ENCODE measurements at regions of chr3 and their contacts with region 1.

Region 1: GRCh38 chr3:14467814-14468620 is 65.6 kb downstream of the SLC6A6 start:
- DNase-seq: peak in 1 of 2 experiments; percentile 72
- H3K4me3 ChIP-seq: no peak overlapping the region
- H3K27ac ChIP-seq: 0 out of 2 replicates have a peak overlapping the region, but pooled peaks have one; percentile 3
- H3K4me1 ChIP-seq: peaks cover 0 to 2% (median under 1%) of the 10 kb centered on the region in 4 experiments; a peak in 4 of 7 replicates
- H3K27me3 ChIP-seq: no peaks in the 10 kb centered on the region
- CTCF ChIP-seq: peak in 2 of 3 experiments; percentile 85; a peak in 3 of 4 replicates
- EP300 ChIP-seq: no peak
- POLR2A ChIP-seq: no peak
- RAD21 ChIP-seq: peak; percentile 88 to 94

Region 2: GRCh38 chr3:14210843-14211594 is 257.0 kb before region 1 on chr3:
- CTCF ChIA-PET with region 1: interaction called, 40 read pairs
- POLR2A ChIA-PET with region 1: no interaction called
- DNase-seq: no peak
- H3K4me3 ChIP-seq: no peak overlapping the region
- H3K27ac ChIP-seq: no peak overlapping the region
- H3K4me1 ChIP-seq: no peaks in the 10 kb centered on the region
- H3K27me3 ChIP-seq: no peaks in the 10 kb centered on the region
- CTCF ChIP-seq: no peak
- EP300 ChIP-seq: no peak
- POLR2A ChIP-seq: no peak
- RAD21 ChIP-seq: no peak

Region 3: DNA sequence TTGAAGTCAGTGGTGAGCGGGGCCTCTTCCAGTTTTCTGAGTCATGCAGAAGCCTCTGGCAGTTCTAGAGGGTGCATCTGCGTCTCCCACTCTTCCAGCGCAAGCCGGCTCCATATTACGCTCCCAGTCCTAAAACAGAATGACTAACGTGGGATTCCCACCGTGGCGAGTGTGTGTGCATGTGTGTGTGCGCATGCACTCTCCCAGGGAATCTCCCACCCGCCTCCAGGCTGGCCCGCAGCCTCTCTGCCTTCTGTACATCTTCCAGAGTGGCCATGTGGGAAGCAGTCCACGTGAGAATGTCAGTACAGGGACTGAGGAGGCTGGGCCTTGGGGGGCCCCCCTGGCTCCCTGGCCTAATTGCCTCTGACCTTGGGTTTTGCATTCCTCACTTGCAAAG is 201.7 kb before region 1 on chr3:
- CTCF ChIA-PET with region 1: interaction called, 49 read pairs
- POLR2A ChIA-PET with region 1: no interaction called
- DNase-seq: no peak
- H3K4me3 ChIP-seq: no peak overlapping the region
- H3K27ac ChIP-seq: no peak overlapping the region
- H3K4me1 ChIP-seq: no peaks in the 10 kb centered on the region
- H3K27me3 ChIP-seq: 0 out of 7 replicates have a peak, but pooled peaks cover 0 to 3% (median 0%) of the 10 kb centered on the region in 4 experiments
- CTCF ChIP-seq: no peak
- EP300 ChIP-seq: no peak
- POLR2A ChIP-seq: no peak
- RAD21 ChIP-seq: no peak

Region 4: DNA sequence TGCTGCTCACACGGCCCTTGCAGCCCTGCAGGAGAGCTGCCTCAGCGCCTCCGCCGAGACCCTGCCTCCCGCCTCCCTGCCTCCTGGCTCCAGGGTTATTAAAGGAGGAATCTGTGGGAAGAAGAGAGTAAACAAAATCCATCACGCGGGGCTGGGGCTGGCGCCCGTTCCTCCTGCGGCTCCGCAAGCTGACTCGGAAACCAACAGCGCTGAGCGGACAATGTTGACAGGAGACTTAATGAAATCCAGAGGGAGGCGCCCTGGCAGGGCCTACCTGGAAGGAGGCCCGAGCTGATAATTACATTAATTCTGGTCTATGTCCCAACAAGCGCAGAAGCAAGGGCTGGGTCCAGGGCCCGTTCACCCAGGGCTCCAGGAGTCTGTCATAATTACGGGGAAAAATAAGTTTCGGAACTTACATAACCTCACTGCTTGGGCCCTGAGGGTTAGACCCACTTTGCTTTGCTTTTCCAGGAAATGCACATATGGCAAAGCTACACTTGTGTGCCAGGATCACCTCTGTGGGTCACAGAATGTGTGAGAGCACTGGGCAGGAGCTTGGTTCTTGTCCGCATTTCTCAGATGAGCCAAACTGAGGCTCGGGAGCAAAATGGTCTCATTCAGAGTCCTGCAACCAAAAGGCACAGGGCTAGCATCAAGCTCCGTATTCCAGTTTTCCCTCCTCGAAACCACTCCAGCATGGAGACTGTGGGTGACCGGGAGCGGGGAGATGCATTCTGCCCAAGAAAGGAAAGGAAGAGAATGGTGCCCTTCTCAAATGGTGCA is 109.4 kb before region 1 on chr3:
- CTCF ChIA-PET with region 1: interaction called, 10 read pairs
- POLR2A ChIA-PET with region 1: no interaction called
- DNase-seq: no peak
- H3K4me3 ChIP-seq: no peak overlapping the region
- H3K27ac ChIP-seq: no peak overlapping the region
- H3K4me1 ChIP-seq: peaks cover 0 to under 1% (median under 1%) of the 10 kb centered on the region in 4 experiments; a peak in 5 of 7 replicates
- H3K27me3 ChIP-seq: no peaks in the 10 kb centered on the region
- CTCF ChIP-seq: 0 out of 4 replicates have a peak, but pooled peaks of 1 of the 3 experiments have one; percentile 9
- EP300 ChIP-seq: no peak
- POLR2A ChIP-seq: no peak
- RAD21 ChIP-seq: 0 out of 4 replicates have a peak, but pooled peaks of 1 of the 2 experiments have one; percentile 5

Region 5: DNA sequence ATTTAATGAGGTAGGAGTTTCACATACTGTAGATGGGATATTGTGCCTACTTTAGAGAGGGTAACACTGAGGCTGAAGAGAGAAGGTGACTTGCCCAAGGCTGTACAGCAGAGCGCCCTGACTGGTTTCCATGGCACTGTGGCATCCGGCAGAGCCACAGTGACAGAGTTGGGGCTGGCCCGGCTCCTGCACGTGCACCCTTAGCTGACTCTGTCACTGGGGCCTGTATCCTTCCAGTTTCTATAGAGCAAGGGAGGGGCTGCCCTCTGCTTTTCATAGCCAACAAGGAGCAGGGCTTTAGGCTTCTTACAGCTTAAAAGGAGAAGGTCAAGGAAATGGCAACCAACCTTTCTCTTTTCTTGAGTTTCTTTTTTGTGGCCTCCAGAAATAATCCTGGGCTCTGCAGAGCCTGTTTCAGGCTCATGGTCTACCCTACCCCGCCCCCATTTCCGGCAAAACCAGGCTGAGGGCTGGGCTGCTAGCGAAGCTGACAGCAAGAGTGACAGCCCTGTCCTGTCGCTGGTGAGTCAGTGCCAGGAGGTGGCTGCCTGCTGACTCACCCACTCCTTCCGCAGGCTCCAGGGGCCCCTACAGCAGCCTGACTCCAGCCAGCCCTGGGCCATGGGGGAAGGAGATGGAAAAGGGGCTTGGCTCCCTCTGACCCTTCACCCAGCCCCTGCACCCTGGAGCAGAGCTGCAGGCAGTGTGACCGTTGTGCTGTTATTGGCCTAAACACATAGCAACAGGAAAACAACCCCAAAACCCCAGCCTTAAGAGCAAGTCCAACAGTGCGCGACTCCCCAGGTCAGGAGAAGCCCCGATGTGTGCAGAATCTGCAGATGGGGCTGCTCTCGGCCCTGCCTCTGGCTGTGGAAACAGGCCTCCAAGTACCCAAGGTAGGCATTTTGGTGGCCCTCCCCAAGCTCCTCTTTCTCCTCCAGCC is 35.9 kb before region 1 on chr3:
- CTCF ChIA-PET with region 1: interaction called, 14 read pairs
- POLR2A ChIA-PET with region 1: no interaction called
- DNase-seq: no peak
- H3K4me3 ChIP-seq: no peak overlapping the region
- H3K27ac ChIP-seq: no peak overlapping the region; the same call in 1 of the 2 replicates
- H3K4me1 ChIP-seq: peaks cover 0 to 18% (median 5%) of the 10 kb centered on the region in 4 experiments; a peak in 5 of 7 replicates
- H3K27me3 ChIP-seq: no peaks in the 10 kb centered on the region
- CTCF ChIP-seq: no peak
- EP300 ChIP-seq: no peak
- POLR2A ChIP-seq: no peak
- RAD21 ChIP-seq: no peak

Region 6: DNA sequence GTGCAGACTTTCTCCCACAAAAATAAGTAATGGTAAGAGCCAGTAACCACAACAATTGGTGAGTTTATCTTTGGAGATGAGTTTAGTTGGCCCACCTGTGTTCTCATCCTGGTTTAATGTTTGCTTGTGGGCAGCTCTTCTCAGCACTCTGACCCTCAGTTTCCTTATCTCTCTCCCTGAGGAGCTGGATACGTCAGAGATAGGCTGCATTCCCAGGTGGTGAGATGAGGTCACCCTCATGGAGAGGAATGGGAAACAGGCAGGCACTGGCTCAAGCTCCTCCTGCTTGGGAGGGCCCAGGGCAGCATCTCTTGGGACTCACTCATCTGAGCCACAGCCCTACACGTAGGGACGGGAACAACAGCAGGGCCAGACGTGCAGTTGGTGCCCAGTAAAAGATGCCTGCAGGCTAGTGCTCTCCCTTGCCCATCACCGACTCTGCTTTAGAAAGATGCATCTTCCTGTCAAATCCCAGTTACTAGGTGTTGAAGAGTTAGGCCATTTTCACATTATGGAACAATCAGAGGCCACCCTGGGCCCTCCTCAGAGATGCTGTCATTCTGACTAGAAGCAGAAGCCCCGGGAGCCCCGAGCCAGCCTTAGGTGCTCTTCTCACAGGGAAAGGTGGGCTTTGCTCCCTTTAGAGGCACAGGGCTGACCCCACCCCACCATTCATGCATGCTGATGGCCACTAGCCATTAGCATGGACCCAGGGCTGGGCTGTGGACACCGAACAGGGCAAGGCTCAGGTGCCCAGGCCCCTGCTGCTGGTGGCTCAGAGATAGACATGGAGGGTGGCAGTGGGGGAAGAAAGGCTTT is 12.4 kb after region 1 on chr3:
- CTCF ChIA-PET with region 1: interaction called, 23 read pairs
- POLR2A ChIA-PET with region 1: no interaction called
- DNase-seq: no peak
- H3K4me3 ChIP-seq: no peak overlapping the region
- H3K27ac ChIP-seq: no peak overlapping the region
- H3K4me1 ChIP-seq: peaks cover 0 to 8% (median 2%) of the 10 kb centered on the region in 4 experiments; a peak in 4 of 7 replicates
- H3K27me3 ChIP-seq: no peaks in the 10 kb centered on the region
- CTCF ChIP-seq: no peak
- EP300 ChIP-seq: no peak
- POLR2A ChIP-seq: no peak
- RAD21 ChIP-seq: no peak